CD14-positive monocyte (primary cell): ENCODE measurements at regions of chr7 and their contacts with region 1.

Region 1: GRCh38 chr7:149497456-149498261 is at the start of gene ZNF746:
- DNase-seq: peak; percentile 72 to 79 (median 78)
- H3K4me3 ChIP-seq: peak within 1 kb of the TSS; percentile 72 to 83 (median 77)
- H3K4me3 Mint-ChIP-seq: peak within 1 kb of the TSS; percentile 96 to 97
- H3K27ac ChIP-seq: peak within 1 kb of the TSS; percentile 25 to 74
- H3K27ac Mint-ChIP-seq: peak within 1 kb of the TSS; percentile 75 to 93 (median 91)
- H3K4me1 ChIP-seq: peaks cover 33 to 37% of the 10 kb centered on the region in 2 donors
- H3K4me1 Mint-ChIP-seq: peaks cover 32% of the 10 kb centered on the region
- H3K27me3 ChIP-seq: no peaks in the 10 kb centered on the region
- H3K27me3 Mint-ChIP-seq: peaks cover 3 to 14% (median 5%) of the 10 kb centered on the region in 3 donors
- CTCF ChIP-seq: peak; percentile 49
- polyA plus RNA-seq, gene ZNF746: 7.5 to 25.6 (median 8.1) TPM

Region 2: DNA sequence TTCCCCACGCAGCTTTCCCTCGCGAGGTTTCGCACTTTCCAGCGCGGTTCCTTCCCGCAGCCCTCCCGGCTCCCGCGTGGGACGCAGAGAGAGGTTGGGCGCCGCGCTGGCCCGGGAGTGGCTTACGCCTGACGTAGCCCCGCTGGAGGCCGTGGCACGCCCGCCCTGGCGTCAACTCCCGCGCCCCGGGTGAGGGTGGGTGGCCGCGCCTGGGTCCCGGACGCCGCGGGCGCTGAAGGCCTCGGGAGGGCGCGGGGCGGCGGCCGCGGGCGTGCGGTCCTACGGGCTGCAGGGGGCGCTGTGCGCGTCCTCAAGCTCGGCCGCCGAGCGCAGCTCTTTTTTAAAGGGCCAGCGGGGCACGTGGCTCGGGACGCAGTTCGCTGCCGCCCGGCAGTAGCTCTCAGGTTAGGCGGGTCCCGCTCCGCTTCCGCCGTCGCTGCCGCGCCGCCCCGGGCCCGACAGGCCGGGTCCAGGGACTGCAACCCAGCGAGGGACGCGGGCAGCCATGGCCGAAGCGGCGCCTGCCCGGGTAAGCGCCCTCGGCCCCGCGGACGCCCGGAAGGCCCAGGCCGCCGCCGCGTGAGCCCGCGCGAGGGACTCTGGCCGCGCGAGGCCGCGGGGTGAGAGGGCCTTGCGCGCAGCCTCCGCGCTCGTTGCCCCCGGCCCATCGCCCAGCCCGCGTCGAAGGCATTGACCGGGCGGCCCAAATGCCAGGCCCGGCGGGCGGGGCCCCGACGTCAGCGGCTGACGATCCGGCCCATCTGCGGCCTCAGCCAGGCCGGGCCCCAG is 235.6 kb before region 1 on chr7 and contains the start of gene ZNF783:
- intact Hi-C with region 1: loop called in 1 of 2 experiments (anchors 5 kb)
- DNase-seq: peak; percentile 77 to 87 (median 83)
- H3K4me3 ChIP-seq: peak within 1 kb of the TSS; percentile 36 to 71 (median 55)
- H3K4me3 Mint-ChIP-seq: peak within 1 kb of the TSS; percentile 80 to 92
- H3K27ac ChIP-seq: peak within 1 kb of the TSS; percentile 35 to 70
- H3K27ac Mint-ChIP-seq: peak within 1 kb of the TSS; percentile 40 to 88 (median 58)
- H3K4me1 ChIP-seq: peaks cover 12 to 22% of the 10 kb centered on the region in 2 donors
- H3K4me1 Mint-ChIP-seq: peaks cover 19% of the 10 kb centered on the region
- H3K27me3 ChIP-seq: no peaks in the 10 kb centered on the region
- H3K27me3 Mint-ChIP-seq: peaks cover 2% of the 10 kb centered on the region in 3 donors
- CTCF ChIP-seq: peak; percentile 94
- polyA plus RNA-seq, gene ZNF783: 1.2 to 16.7 (median 1.5) TPM

Region 3: GRCh38 chr7:149330914-149331567 is 166.6 kb before region 1 on chr7:
- intact Hi-C with region 1: no loop called
- DNase-seq: no peak
- H3K4me3 ChIP-seq: no peak overlapping the region
- H3K4me3 Mint-ChIP-seq: no peak overlapping the region
- H3K27ac ChIP-seq: no peak overlapping the region
- H3K27ac Mint-ChIP-seq: peak overlapping the region in 1 of 7 donors; percentile 54
- H3K4me1 ChIP-seq: no peaks in the 10 kb centered on the region
- H3K4me1 Mint-ChIP-seq: no peaks in the 10 kb centered on the region
- H3K27me3 ChIP-seq: no peaks in the 10 kb centered on the region
- H3K27me3 Mint-ChIP-seq: peaks cover 0 to 3% (median 2%) of the 10 kb centered on the region in 3 donors
- CTCF ChIP-seq: no peak

Region 4: DNA sequence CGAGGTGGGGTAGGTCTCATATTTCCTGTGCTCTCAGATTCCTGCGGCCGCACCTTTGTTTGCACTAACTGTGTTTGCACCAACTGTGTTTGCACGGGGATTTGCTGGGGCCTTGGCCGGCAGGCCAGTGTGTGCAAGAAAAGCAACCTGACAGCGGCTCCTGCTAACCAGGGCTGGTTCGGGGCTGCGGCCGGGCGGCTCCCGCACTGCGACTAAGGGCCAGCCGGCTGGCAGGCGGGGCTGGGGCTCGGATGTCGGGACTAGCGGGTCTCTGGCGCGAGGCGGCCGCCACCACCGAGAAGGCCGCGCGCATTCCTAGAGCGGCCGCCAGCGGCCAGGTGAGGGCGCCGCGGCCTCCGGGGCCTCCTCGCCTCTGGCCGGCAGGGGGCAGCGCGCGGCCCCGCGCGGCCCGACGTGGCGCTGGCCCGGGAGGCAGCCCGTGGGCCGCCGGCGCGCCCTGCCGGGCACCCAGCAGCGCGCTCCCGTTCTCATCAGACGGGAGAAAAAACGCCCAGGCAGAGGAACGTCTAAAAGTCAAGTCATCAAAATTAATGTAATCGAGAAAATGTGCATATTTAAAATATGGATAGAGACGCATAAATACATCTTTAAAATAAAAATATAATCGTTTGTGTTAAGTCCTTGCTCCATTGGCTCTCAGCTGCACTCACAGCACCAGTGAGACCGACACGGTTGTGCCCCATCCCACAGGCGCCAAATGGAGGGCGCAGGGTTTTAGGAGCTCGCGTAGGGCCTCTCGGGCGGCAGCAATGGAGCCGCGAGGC is 75.3 kb before region 1 on chr7:
- intact Hi-C with region 1: loop called (anchors 2 kb)
- DNase-seq: peak; percentile 41 to 67 (median 65)
- H3K4me3 ChIP-seq: peak overlapping the region; percentile 39 to 78 (median 46)
- H3K4me3 Mint-ChIP-seq: peak overlapping the region; percentile 72 to 86
- H3K27ac ChIP-seq: no peak overlapping the region
- H3K27ac Mint-ChIP-seq: no peak overlapping the region
- H3K4me1 ChIP-seq: peaks cover 16 to 20% of the 10 kb centered on the region in 2 donors
- H3K4me1 Mint-ChIP-seq: peaks cover 14% of the 10 kb centered on the region
- H3K27me3 ChIP-seq: peaks cover 7 to 15% of the 10 kb centered on the region in 2 donors
- H3K27me3 Mint-ChIP-seq: peaks cover 11 to 32% (median 16%) of the 10 kb centered on the region in 3 donors
- CTCF ChIP-seq: peak; percentile 58

Region 5: DNA sequence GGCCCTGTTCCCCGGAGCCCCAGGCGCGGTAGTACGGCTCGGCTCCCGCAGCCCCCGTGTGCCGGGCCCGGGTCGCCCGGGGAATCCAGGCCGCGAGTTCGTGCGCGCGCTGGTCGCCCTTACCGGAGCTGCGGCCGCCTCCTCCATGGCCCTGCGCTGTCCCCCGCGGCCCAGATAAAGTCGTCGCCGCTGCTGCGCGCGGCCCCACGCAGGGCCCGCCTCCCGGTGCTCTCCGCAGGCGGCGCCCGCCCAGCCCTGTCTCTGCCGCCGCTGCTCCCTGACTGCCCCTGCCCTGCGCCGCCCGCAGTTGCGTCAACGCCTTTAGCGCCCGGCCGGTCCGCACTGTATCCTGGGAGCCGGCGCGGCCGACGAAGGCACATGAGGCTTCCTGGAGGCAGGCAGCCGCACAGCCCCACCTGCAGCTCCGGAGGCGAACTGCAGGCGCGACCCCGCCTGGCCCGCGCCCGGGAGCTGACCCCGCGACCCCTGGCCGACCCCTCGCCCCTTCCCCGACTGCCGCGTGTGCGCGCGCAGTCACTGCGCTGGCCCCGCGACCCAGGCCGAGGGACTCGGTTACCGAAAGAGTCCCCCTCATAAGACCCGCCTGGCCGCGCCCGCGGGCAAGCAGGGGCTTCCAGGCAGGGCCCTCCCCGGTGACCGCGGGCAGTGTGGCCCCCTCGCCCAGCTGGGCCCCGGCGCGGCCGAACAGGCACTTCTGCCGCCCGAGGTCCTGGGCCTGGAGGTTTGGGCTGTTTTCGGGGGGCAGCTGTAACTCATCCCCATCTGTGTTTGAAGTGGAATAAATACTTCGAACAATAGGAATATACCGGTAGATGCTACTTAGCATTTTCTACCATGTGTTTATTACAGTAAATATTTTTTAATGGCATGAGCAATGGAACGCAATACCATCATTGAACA is 127.0 kb after region 1 on chr7:
- intact Hi-C with region 1: loop called (anchors 2 to 5 kb)
- DNase-seq: peak; percentile 92 to 93 (median 93)
- H3K4me3 ChIP-seq: peak overlapping the region; percentile 75 to 94 (median 92)
- H3K4me3 Mint-ChIP-seq: peak overlapping the region; percentile 71 to 76
- H3K27ac ChIP-seq: peak overlapping the region in 1 of 2 donors; percentile 73
- H3K27ac Mint-ChIP-seq: peak overlapping the region in 5 of 7 donors; percentile 9 to 86 (median 77)
- H3K4me1 ChIP-seq: peaks cover 33 to 42% of the 10 kb centered on the region in 2 donors
- H3K4me1 Mint-ChIP-seq: peaks cover 47% of the 10 kb centered on the region
- H3K27me3 ChIP-seq: no peaks in the 10 kb centered on the region
- H3K27me3 Mint-ChIP-seq: peaks cover 2 to 10% (median 2%) of the 10 kb centered on the region in 3 donors
- CTCF ChIP-seq: peak; percentile 95

Region 6: GRCh38 chr7:149771721-149772240 is 274.1 kb after region 1 on chr7:
- intact Hi-C with region 1: loop called in 1 of 2 experiments (anchors 10 kb)
- DNase-seq: peak; percentile 81 to 89 (median 82)
- H3K4me3 ChIP-seq: peak overlapping the region; percentile 89 to 98 (median 94)
- H3K4me3 Mint-ChIP-seq: peak overlapping the region; percentile 81 to 85
- H3K27ac ChIP-seq: peak overlapping the region; percentile 36 to 60
- H3K27ac Mint-ChIP-seq: peak overlapping the region; percentile 26 to 92 (median 87)
- H3K4me1 ChIP-seq: peaks cover 44 to 45% of the 10 kb centered on the region in 2 donors
- H3K4me1 Mint-ChIP-seq: peaks cover 40% of the 10 kb centered on the region
- H3K27me3 ChIP-seq: no peaks in the 10 kb centered on the region
- H3K27me3 Mint-ChIP-seq: peaks cover 0 to 5% (median 0%) of the 10 kb centered on the region in 3 donors
- CTCF ChIP-seq: no peak